Panc1 (cell line): ENCODE measurements at regions of chr19 and their contacts with region 1.

Region 1: DNA sequence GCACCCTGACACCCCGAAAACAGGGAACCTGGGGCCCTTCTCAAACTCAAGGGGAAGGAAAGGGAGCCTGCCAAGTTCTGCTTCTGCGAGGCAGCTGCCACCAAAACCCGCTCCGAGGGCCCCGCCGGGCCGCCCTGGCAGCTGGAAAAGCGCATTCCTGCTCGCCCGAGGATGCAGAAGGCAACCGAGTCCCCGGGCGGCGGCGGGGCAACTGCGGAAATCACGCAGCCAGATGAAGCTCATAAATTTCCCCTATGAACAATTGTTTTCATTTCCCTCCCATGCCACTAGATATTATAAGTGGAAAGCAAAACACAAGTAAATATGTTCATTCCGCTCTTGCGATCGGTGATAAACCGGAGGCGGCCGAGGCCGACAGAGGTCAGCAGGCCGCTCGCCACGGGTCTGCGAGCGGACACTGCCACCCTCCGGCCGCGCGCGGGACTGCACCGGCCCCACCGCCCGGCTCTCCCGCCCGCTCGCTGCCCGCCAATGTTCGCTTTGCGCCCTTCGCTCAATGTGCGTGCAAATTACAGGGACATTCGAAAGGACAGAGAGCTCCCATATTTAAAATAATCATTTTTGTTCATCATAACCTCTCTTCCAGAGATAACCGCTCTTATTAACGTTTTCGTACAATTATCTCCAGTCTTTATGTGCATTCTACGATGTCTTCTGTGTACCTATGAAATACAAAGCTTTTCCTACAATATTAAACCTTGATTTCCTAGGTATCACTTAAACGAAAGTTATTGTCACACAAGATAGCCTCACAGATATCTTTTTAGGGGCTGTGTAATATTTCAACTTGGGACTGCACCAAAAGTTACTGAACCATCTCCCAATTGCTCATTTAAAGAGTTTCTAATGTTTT is 120.8 kb upstream of the ZNF507 start:
- DNase-seq: no peak
- ATAC-seq: peak; percentile 94
- H3K4me3 ChIP-seq: peak overlapping the region in 1 of 2 experiments; percentile 15; a peak in 1 of 4 replicates
- H3K27ac ChIP-seq: no peak overlapping the region
- H3K4me1 ChIP-seq: no peaks in the 10 kb centered on the region
- H3K27me3 ChIP-seq: peaks cover 7% of the 10 kb centered on the region
- CTCF ChIP-seq: peak; percentile 100

Region 2: DNA sequence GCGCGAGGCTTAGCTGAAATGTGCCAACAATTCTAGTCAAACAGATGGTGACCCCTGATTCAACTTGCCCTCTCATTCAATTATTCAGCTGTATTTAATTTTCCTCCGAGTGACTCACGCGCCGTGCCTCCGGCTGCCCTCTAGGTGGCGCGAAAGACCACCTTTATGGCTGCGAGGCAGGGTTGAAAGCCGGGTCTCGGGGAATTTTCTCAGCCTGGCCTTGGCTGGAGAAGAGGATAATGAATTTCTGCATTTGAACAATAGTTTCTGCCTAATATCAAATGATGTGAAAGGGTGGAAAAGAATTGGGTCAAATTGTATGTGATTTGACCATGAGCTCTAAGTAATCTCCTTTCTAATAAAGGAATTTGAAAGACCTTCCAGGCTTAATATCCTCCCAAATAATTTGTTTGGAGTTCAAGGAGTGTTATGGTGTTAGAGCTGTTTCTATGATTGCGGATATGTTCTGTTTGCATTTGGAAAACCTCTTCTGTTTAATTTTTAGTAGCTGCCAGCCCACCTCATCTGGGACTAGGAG is 1541.5 kb before region 1 on chr19:
- CTCF ChIA-PET with region 1: interaction called, 4 read pairs
- POLR2A ChIA-PET with region 1: no interaction called
- in situ Hi-C with region 1: no loop called
- intact Hi-C with region 1: loop called (anchors 5 kb)
- DNase-seq: peak; percentile 42
- ATAC-seq: peak; percentile 80
- H3K4me3 ChIP-seq: no peak overlapping the region
- H3K27ac ChIP-seq: no peak overlapping the region
- H3K4me1 ChIP-seq: peaks cover 10% of the 10 kb centered on the region
- H3K27me3 ChIP-seq: peaks cover 13% of the 10 kb centered on the region
- CTCF ChIP-seq: peak; percentile 96

Region 3: GRCh38 chr19:31676271-31677004 is 548.2 kb before region 1 on chr19:
- CTCF ChIA-PET with region 1: no interaction called
- POLR2A ChIA-PET with region 1: no interaction called
- in situ Hi-C with region 1: no loop called
- intact Hi-C with region 1: loop called (anchors 10 kb)
- DNase-seq: no peak
- ATAC-seq: 0 out of 2 replicates have a peak, but pooled peaks have one; percentile 60
- H3K4me3 ChIP-seq: no peak overlapping the region
- H3K27ac ChIP-seq: no peak overlapping the region
- H3K4me1 ChIP-seq: no peaks in the 10 kb centered on the region
- H3K27me3 ChIP-seq: no peaks in the 10 kb centered on the region; the same call in 1 of the 2 replicates
- CTCF ChIP-seq: peak; percentile 71

Region 4: DNA sequence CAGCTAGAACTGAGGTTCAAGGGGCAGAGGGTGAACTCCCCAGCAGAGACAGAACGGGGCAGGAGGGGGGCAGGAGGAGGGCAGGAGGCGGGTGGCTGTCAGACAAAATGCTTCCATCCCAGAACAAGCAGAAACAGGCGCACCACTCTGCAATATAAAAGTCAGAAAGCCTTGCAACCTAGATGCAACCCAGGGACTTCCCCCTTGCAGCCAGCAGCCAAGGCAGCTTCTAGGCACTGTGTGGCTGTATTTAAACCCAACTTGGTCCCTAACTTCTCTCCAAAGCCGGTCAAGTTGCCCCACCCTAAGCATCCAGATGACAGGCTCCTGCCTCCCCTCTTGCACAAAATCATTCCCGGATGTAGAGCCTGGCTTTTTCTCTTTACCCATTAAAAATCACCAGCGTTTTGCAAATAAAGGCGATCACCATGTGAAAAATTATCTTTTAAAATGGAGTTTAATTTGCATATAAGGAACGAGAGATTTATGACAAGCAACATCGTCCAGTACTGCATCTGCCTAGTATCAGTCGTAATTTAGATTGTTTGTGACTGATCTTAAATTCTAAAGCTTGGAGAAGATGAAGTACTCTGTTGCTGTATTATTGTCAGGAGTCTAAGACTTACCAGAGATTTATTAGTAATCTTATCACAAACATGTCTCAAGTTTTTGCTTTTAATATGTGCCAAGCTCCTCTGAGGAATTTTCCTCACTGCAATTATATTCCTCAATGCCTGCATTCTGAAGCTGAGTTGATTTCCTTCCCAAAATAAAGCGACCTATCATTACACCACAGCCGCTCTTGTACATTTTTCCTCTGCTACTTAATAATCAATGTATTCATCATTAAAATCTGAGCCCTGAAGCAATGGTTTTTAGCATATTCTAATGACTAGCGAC is 186.3 kb before region 1 on chr19:
- CTCF ChIA-PET with region 1: no interaction called
- POLR2A ChIA-PET with region 1: no interaction called
- in situ Hi-C with region 1: no loop called
- intact Hi-C with region 1: loop called (anchors 10 kb)
- DNase-seq: no peak
- ATAC-seq: no peak
- H3K4me3 ChIP-seq: no peak overlapping the region
- H3K27ac ChIP-seq: no peak overlapping the region
- H3K4me1 ChIP-seq: no peaks in the 10 kb centered on the region
- H3K27me3 ChIP-seq: peaks cover 71% of the 10 kb centered on the region
- CTCF ChIP-seq: no peak

Region 5: DNA sequence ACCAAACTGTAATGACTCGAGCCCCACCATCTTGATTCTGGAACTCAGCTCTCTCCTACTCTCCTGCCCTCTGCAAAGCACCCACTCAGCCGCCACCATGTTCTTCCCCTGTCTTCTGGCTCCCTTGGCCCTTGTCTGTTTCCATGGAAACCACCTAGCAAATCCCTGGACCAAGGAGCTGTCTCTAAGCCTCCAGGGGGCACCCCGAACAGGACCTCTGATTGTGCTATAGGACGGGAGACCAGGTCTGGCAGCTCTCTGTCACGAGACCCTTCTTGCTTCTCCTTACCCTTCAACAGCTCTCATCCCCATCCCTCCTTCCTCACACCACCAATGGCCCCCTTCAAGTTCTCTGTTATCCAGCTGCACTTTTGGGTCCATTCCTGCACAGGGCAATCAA is 156.9 kb before region 1 on chr19:
- CTCF ChIA-PET with region 1: no interaction called
- POLR2A ChIA-PET with region 1: no interaction called
- in situ Hi-C with region 1: no loop called
- intact Hi-C with region 1: no loop called
- DNase-seq: no peak
- ATAC-seq: no peak
- H3K4me3 ChIP-seq: no peak overlapping the region
- H3K27ac ChIP-seq: no peak overlapping the region
- H3K4me1 ChIP-seq: no peaks in the 10 kb centered on the region
- H3K27me3 ChIP-seq: peaks cover 18% of the 10 kb centered on the region
- CTCF ChIP-seq: no peak

Region 6: GRCh38 chr19:32154418-32154817 is 70.2 kb before region 1 on chr19:
- CTCF ChIA-PET with region 1: no interaction called
- POLR2A ChIA-PET with region 1: no interaction called
- in situ Hi-C with region 1: no loop called
- intact Hi-C with region 1: no loop called
- DNase-seq: no peak
- ATAC-seq: no peak
- H3K4me3 ChIP-seq: no peak overlapping the region
- H3K27ac ChIP-seq: no peak overlapping the region
- H3K4me1 ChIP-seq: no peaks in the 10 kb centered on the region
- H3K27me3 ChIP-seq: peaks cover 2% of the 10 kb centered on the region; the same call in 1 of the 2 replicates
- CTCF ChIP-seq: no peak